ENCODE measurements at regions of chr2 and their contacts with region 1.

Region 1: DNA sequence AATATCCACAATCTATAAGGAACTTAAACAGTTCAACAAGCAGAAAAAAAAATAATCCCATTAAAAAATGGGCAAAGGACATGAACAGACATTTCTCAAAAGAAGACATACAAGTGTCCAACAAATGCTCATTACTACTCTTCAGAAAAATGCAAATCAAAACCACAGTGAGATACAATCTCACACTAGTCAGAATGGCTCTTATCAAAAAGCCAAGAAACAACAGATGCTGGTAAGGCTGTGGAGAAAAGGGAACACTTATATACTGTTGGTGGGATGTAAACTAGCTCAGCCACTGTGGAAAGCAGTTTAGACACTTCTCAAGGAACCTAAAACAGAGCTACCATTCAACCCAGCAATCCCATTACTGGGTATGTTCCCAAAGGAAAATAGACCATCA is 7.2 kb upstream of the CRYGB start:
- DNase-seq: no peak

Region 2: DNA sequence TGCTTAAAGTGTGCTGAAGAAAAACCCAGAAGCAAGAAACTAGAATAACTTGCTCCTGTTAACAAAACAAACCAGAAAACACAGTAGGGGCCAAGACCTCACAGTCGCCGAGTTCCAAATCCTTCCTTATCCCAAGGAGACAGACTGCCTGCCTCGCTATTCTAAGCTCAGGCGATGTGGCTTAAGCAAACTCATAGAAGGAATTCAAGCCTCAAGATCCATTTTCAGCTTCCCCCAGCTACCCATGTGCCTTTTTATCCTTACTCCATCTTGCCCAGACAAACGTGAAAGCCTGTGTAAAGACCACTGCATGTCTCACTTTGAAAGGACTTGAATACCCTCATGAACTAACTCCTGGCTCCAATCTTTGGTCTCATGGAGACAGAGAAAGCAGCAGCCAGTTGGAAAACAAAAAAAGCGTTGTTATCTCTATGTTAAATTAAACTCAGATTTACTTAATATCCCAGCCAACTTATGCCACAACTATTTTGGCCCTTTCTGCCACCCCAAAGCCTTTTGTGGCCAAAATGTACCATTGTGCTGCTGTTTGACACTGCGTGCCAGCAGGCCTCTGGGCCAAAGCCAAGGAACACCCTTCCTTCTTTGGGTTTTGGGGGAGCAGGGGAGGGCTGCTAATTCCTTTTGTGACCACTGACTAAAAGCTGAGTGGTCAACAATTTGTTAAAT is 260.3 kb before region 1 on chr2:
- CTCF ChIA-PET with region 1: interaction called, 14 read pairs
- POLR2A ChIA-PET with region 1: no interaction called
- DNase-seq: no peak

Region 3: DNA sequence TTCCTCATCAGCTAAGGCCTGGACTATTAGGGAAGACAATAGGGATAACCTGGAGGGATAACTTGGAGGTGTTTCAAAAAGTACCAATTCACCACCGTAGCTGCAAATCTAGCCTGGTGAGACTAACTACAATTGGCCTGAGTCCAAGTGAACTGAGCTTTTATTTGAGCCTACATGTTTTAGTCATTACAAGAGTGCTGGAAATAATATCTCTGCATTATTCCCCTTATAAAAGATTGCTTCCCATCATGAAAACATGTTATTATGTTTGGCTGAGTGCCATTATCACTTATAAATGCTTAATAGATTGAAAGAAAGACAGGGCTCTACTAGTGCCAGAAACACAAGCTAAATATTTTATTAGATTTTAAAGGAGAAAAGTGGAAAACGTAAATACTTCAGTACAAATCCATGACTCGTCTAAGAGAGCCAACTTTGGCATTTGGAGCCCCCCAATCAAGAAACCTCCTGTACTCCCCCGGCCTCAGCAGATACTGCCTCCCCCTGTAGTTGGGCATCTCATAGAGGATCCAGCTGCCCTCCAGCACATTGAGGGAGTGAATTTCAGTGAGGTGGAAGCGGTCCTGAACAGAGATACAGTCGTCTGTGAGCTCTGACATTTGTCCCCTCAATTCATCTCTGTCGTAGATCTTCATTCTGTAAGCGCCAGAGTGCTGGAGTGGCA is 10.8 kb before region 1 on chr2:
- CTCF ChIA-PET with region 1: no interaction called
- POLR2A ChIA-PET with region 1: no interaction called
- DNase-seq: no peak